Activated CD4-positive, alpha-beta T cell treated with anti-CD3 and anti-CD28 coated beads, Interleukin-2, amount 10 ng/mL, durations not matched to agents 24 days and 14 days (primary cell): ENCODE measurements at regions of chr3 and their contacts with region 1.

Region 1: DNA sequence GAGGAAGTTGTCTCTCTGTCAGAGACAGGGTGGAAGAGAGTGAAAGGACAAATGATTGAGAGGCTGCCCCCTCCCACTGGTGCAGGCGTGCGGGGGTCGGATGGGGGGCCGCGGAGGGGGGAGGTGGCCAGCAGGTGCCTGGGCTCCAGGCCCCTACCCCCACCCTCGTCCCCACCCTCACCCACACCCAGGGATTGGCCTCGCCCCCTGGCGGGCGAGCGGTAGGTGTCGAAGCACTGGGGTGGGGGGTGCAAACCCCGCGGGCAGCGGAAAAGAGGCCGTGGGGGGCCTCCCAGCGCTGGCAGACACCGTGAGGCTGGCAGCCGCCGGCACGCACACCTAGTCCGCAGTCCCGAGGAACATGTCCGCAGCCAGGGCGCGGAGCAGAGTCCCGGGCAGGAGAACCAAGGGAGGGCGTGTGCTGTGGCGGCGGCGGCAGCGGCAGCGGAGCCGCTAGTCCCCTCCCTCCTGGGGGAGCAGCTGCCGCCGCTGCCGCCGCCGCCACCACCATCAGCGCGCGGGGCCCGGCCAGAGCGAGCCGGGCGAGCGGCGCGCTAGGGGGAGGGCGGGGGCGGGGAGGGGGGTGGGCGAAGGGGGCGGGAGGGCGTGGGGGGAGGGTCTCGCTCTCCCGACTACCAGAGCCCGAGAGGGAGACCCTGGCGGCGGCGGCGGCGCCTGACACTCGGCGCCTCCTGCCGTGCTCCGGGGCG is at the start of gene KAT2B:
- DNase-seq: peak; percentile 94
- H3K4me3 Mint-ChIP-seq: peak within 1 kb of the TSS; percentile 96
- H3K27ac Mint-ChIP-seq: peak within 1 kb of the TSS; percentile 98
- H3K4me1 Mint-ChIP-seq: peaks cover 49% of the 10 kb centered on the region
- H3K27me3 Mint-ChIP-seq: no peaks in the 10 kb centered on the region
- total RNA-seq, gene KAT2B: 23.3 and 27.9 TPM in 2 replicates

Region 2: DNA sequence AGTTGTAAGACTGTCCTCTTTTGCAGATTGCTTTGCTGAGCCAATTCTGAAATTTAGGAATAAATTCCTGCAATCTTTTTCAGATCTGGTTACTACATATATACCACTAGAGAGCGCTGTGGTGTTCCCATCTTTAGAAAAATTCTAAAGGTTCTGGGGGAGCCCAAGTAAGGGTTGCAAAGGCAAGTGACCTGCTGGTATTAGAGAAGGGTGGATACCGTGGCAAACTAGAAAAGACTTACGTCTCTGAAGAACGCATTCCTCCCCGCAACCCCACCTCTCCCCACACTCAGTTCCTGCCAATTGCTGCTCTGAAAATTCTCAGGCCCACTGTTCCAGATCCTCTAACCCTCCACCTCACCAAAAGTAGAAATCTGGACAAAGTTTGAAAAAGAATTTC is 154.5 kb before region 1 on chr3:
- intact Hi-C with region 1: loop called (anchors 2 kb)
- DNase-seq: peak; percentile 63
- H3K4me3 Mint-ChIP-seq: no peak overlapping the region
- H3K27ac Mint-ChIP-seq: no peak overlapping the region
- H3K4me1 Mint-ChIP-seq: peaks cover 6% of the 10 kb centered on the region
- H3K27me3 Mint-ChIP-seq: no peaks in the 10 kb centered on the region

Region 3: GRCh38 chr3:20054549-20054987 is 14.6 kb after region 1 on chr3:
- intact Hi-C with region 1: loop called (anchors 1 kb)
- DNase-seq: peak; percentile 84
- H3K4me3 Mint-ChIP-seq: no peak overlapping the region
- H3K27ac Mint-ChIP-seq: no peak overlapping the region
- H3K4me1 Mint-ChIP-seq: peaks cover 30% of the 10 kb centered on the region
- H3K27me3 Mint-ChIP-seq: no peaks in the 10 kb centered on the region

Region 4: GRCh38 chr3:20104167-20104661 is 64.3 kb after region 1 on chr3:
- intact Hi-C with region 1: loop called (anchors 1 kb)
- DNase-seq: peak; percentile 86
- H3K4me3 Mint-ChIP-seq: peak overlapping the region; percentile 67
- H3K27ac Mint-ChIP-seq: peak overlapping the region; percentile 86
- H3K4me1 Mint-ChIP-seq: peaks cover 57% of the 10 kb centered on the region
- H3K27me3 Mint-ChIP-seq: no peaks in the 10 kb centered on the region

Region 5: DNA sequence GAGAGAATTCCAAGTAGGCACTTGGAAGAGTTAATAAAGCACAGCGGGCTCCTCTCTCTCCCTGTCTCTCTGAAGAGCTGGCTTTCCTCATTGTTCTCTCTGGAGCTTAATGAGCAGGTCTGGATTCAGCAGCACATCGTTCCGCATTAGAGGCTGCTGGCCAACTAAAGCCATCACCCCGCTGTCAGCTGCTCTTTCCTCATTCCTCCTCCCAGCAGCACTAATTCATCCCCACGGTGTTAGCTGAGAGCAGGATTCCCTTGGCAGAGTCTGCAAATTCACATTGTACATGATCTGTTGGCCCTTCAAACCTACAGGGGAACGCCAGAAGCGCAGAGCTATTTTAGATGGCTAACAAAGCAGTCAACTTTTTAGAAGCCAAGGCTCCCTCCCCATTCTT is 101.9 kb after region 1 on chr3:
- intact Hi-C with region 1: no loop called
- DNase-seq: no peak
- H3K4me3 Mint-ChIP-seq: no peak overlapping the region
- H3K27ac Mint-ChIP-seq: no peak overlapping the region
- H3K4me1 Mint-ChIP-seq: no peaks in the 10 kb centered on the region
- H3K27me3 Mint-ChIP-seq: no peaks in the 10 kb centered on the region